MCF 10A (cell line): ENCODE measurements at regions of chr7 and their contacts with region 1.

Region 1: GRCh38 chr7:142478479-142479072 is 220.7 kb upstream of the PRSS58 start:
- DNase-seq: peak; percentile 80
- H3K4me3 Mint-ChIP-seq: no peak overlapping the region
- H3K27ac Mint-ChIP-seq: peak overlapping the region; percentile 22
- H3K4me1 Mint-ChIP-seq: peaks cover 32% of the 10 kb centered on the region
- H3K27me3 Mint-ChIP-seq: peaks cover 9% of the 10 kb centered on the region
- CTCF ChIP-seq: peak; percentile 57

Region 2: DNA sequence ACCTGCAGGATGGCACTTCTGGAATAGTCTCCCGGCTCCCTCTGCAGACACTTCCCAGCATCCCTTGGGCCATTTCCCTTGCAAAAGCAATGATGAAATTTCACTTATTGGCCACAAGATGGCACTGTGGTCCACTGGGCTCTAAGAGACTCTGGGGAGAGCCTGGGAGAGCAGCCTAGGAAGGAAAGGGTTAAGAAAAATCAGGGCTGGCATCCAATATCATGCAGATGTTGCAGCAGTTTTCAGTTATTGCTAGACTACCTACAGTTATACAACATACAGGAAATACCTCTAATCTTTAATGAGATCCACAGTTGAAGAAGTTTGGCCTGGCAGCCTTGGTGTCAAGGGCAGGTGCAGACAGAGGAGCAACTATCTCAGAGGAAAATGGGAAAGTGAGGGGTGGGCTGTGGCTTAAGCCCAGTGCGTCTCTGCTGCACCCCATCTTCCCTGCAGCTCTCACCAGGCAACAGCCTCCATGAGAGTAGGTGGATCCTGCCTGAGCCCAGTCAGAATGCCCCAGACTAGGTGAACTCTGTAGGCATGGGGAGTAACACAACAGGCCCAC is 120.5 kb before region 1 on chr7:
- CTCF ChIA-PET with region 1: interaction called, 34 read pairs
- POLR2A ChIA-PET with region 1: interaction called, 5 read pairs
- intact Hi-C with region 1: loop called (anchors 1 kb)
- DNase-seq: peak; percentile 87
- H3K4me3 Mint-ChIP-seq: peak overlapping the region; percentile 38
- H3K27ac Mint-ChIP-seq: no peak overlapping the region
- H3K4me1 Mint-ChIP-seq: no peaks in the 10 kb centered on the region
- H3K27me3 Mint-ChIP-seq: peaks cover 28% of the 10 kb centered on the region
- CTCF ChIP-seq: peak; percentile 92

Region 3: DNA sequence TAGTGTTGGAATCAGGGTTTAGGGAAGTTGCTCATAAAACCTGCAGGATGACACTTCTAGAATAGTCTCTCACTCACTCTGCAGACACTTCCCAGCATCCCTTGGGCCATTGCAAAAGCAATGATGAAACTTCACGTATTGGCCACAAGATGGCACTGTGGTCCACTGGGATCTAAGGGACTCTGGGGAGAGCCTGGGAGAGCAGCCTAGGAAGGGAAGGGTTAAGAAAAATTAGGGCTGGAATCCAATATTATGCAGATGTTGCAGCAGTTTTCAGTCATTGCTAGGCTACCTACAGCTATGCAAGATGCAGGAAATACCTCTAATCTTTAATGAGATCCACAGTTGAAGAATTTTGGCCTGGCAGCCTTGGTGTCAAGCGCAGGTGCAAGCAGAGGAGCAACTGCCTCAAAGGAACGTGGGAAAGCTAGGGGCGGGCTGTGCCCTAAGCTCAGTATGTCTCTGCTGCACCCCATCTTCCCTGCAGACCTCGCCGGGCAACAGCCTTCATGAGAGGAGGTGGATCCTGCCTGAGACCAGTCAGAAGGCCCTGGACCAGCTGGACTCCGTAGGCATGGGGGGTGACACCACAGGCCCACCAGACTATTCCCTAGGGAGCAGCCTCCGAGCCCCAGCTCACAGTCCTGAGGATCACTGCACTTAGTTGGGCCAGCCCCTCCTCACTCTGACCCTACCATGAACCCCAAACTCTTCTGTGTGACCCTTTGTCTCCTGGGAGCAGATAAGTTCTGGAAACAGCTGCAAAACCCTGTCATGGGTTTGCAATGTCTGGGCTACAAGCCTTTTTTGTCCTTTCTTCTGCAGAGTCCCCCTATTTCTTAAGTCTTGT is 92.9 kb before region 1 on chr7:
- CTCF ChIA-PET with region 1: interaction called, 56 read pairs
- POLR2A ChIA-PET with region 1: no interaction called
- intact Hi-C with region 1: loop called (anchors 2 kb)
- DNase-seq: peak; percentile 87
- H3K4me3 Mint-ChIP-seq: no peak overlapping the region
- H3K27ac Mint-ChIP-seq: no peak overlapping the region
- H3K4me1 Mint-ChIP-seq: peaks cover 24% of the 10 kb centered on the region
- H3K27me3 Mint-ChIP-seq: no peaks in the 10 kb centered on the region
- CTCF ChIP-seq: peak; percentile 77

Region 4: DNA sequence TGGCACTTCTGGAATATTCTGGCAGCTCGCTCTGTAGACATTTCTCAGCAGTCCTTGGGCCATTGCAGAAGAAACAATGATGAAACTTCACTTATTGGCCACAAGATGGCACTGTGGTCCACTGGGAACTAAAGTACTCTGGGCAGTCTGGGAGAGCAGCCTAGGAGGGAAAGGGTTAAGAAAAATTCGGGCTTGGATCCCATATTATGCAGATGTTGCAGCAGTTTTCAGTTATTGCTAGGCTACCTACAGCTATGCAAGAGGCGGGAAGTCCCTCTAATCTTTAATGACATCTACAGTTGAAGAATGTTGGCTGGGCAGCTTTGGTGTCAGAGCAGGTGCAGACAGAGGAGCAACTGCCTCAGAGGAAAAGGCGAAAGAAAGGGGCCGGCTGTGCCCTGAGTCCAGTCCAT is 19.0 kb before region 1 on chr7:
- CTCF ChIA-PET with region 1: interaction called, 345 read pairs
- POLR2A ChIA-PET with region 1: interaction called, 7 read pairs
- intact Hi-C with region 1: loop called (anchors 1 kb)
- DNase-seq: peak; percentile 82
- H3K4me3 Mint-ChIP-seq: no peak overlapping the region
- H3K27ac Mint-ChIP-seq: no peak overlapping the region
- H3K4me1 Mint-ChIP-seq: peaks cover 10% of the 10 kb centered on the region
- H3K27me3 Mint-ChIP-seq: peaks cover 42% of the 10 kb centered on the region
- CTCF ChIP-seq: peak; percentile 65

Region 5: GRCh38 chr7:142508258-142508689 is 29.7 kb after region 1 on chr7:
- CTCF ChIA-PET with region 1: interaction called, 261 read pairs
- POLR2A ChIA-PET with region 1: no interaction called
- intact Hi-C with region 1: no loop called
- DNase-seq: peak; percentile 21
- H3K4me3 Mint-ChIP-seq: no peak overlapping the region
- H3K27ac Mint-ChIP-seq: peak overlapping the region; percentile 52
- H3K4me1 Mint-ChIP-seq: peaks cover 6% of the 10 kb centered on the region
- H3K27me3 Mint-ChIP-seq: peaks cover 11% of the 10 kb centered on the region
- CTCF ChIP-seq: no peak

Region 6: DNA sequence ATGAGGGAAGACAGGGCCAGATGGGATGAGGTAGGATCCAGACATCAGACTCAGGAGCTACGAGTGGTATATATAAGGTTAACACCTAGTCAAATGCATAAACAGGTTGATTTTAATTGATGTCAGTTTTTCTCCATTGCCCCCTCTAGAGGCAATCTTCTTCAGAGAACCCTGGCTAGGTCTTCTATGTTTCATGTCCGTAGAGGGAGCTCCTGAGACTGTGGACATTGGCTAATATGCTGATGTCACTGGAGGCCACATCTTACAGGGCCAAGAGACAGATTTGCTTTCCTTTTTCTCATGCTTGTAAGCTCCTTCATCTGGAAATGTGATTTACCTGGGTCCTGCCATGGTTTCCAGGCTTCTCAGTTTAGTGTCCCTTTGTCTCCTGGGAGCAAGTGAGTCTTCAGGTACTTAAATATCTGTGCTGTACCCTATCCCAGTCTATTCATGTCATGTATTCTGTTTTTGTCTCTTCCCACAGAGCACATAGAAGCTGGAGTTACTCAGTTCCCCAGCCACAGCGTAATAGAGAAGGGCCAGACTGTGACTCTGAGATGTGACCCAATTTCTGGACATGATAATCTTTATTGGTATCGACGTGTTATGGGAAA is 109.1 kb after region 1 on chr7:
- CTCF ChIA-PET with region 1: interaction called, 13 read pairs
- POLR2A ChIA-PET with region 1: no interaction called
- intact Hi-C with region 1: no loop called
- DNase-seq: peak; percentile 85
- H3K4me3 Mint-ChIP-seq: no peak overlapping the region
- H3K27ac Mint-ChIP-seq: no peak overlapping the region
- H3K4me1 Mint-ChIP-seq: peaks cover 6% of the 10 kb centered on the region
- H3K27me3 Mint-ChIP-seq: no peaks in the 10 kb centered on the region
- CTCF ChIP-seq: peak; percentile 63

Region 7: GRCh38 chr7:143005632-143006260 is 527.2 kb after region 1 on chr7:
- CTCF ChIA-PET with region 1: no interaction called
- POLR2A ChIA-PET with region 1: no interaction called
- intact Hi-C with region 1: no loop called
- DNase-seq: no peak
- H3K4me3 Mint-ChIP-seq: no peak overlapping the region
- H3K27ac Mint-ChIP-seq: no peak overlapping the region
- H3K4me1 Mint-ChIP-seq: no peaks in the 10 kb centered on the region
- H3K27me3 Mint-ChIP-seq: peaks cover 41% of the 10 kb centered on the region
- CTCF ChIP-seq: no peak